ENCODE measurements at regions of chr7 and their contacts with region 1.

Region 1: DNA sequence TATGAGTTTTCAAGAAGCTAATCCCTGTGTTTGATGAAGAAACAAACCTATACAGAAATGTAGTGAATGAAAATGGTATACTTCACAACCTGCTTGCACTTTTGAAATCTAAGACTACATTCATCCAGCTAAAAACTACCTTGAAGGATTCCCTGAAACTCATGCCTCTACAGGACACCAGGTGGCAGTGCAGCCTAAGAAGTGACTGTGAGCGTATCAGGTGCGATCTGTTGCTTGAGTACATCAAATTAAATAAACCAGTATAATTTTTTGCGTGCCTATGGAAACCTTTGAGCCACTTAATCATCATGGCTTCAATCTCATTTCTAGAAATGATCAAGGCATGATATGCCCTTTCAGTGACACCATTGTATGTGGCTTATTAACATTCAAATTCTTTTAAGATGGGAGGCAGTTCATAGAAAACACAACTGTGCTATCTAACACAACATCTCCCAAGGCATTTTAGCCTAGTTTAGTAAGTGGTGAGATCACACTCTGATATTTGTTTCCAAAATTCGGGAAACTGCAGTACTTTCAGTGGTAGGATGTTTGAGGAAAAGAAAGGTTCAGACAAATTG is 57.4 kb downstream of the PPP1R17 start:
- DNase-seq: peak; percentile 59 to 60
- H3K4me3 ChIP-seq: no peak overlapping the region
- H3K27ac ChIP-seq: no peak overlapping the region
- H3K4me1 ChIP-seq: no peaks in the 10 kb centered on the region
- H3K27me3 ChIP-seq: peaks cover 12% of the 10 kb centered on the region; the same call in 1 of the 2 replicates
- CTCF ChIP-seq: peak; percentile 97

Region 2: DNA sequence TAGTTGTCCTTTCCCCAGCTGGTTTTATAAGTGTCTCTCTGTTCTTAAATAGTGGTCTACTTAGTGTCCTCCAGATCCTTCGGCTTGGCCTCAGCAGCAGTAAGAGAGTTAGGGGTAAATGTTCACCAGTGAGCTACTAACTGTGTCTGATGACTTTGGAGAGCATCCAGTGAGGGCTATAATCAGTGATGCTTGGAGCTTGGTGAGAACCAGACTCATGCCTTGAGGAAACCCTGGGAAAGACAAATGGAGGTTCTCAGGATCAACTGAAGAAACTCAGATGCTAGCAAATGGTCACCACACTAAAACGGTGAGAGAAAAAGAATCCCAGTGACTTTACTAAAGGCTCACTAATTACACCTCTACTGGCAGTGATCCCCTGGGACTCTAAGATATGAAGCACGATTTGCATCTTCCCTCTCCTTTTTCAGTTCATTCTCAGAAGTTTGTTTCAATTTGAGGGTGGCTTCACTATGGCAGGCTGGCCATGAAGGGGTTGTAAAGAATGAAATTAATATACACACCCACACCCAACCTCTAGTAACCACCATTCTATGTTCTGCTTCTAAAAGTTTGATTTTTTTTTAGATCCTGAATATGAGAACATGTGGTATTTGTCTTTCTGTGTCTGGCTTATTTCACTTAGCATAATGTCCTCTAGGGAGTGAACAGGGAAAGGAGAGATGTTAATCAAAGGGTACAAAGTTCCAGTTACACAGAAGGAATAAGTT is 147.9 kb after region 1 on chr7:
- CTCF ChIA-PET with region 1: no interaction called
- POLR2A ChIA-PET with region 1: no interaction called
- intact Hi-C with region 1: no loop called
- DNase-seq: no peak
- H3K4me3 ChIP-seq: no peak overlapping the region
- H3K27ac ChIP-seq: no peak overlapping the region
- H3K4me1 ChIP-seq: no peaks in the 10 kb centered on the region
- H3K27me3 ChIP-seq: no peaks in the 10 kb centered on the region
- CTCF ChIP-seq: no peak

Region 3: GRCh38 chr7:32062150-32062549 is 317.8 kb after region 1 on chr7:
- CTCF ChIA-PET with region 1: no interaction called
- POLR2A ChIA-PET with region 1: no interaction called
- intact Hi-C with region 1: loop called (anchors 1 kb)
- DNase-seq: peak; percentile 31 to 35
- H3K4me3 ChIP-seq: no peak overlapping the region
- H3K27ac ChIP-seq: no peak overlapping the region
- H3K4me1 ChIP-seq: no peaks in the 10 kb centered on the region
- H3K27me3 ChIP-seq: peaks cover 53% of the 10 kb centered on the region
- CTCF ChIP-seq: peak; percentile 72

Region 4: GRCh38 chr7:32204361-32205018 is 460.1 kb after region 1 on chr7:
- CTCF ChIA-PET with region 1: interaction called, 5 read pairs
- POLR2A ChIA-PET with region 1: no interaction called
- intact Hi-C with region 1: loop called (anchors 1 kb)
- DNase-seq: peak; percentile 37 to 58
- H3K4me3 ChIP-seq: no peak overlapping the region
- H3K27ac ChIP-seq: no peak overlapping the region
- H3K4me1 ChIP-seq: no peaks in the 10 kb centered on the region
- H3K27me3 ChIP-seq: peaks cover 11% of the 10 kb centered on the region; the same call in 1 of the 2 replicates
- CTCF ChIP-seq: peak; percentile 77

Region 5: GRCh38 chr7:32347244-32347828 is 603.0 kb after region 1 on chr7:
- CTCF ChIA-PET with region 1: no interaction called
- POLR2A ChIA-PET with region 1: no interaction called
- intact Hi-C with region 1: loop called (anchors 2 kb)
- DNase-seq: peak in 1 of 2 experiments; percentile 4
- H3K4me3 ChIP-seq: no peak overlapping the region
- H3K27ac ChIP-seq: no peak overlapping the region
- H3K4me1 ChIP-seq: no peaks in the 10 kb centered on the region
- H3K27me3 ChIP-seq: peaks cover 11% of the 10 kb centered on the region; the same call in 1 of the 2 replicates
- CTCF ChIP-seq: peak; percentile 92

Region 6: GRCh38 chr7:32893207-32893524 is 1148.8 kb after region 1 on chr7:
- CTCF ChIA-PET with region 1: no interaction called
- POLR2A ChIA-PET with region 1: no interaction called
- intact Hi-C with region 1: no loop called
- DNase-seq: no peak
- H3K4me3 ChIP-seq: peak overlapping the region; percentile 86
- H3K27ac ChIP-seq: peak overlapping the region; percentile 87
- H3K4me1 ChIP-seq: peaks cover 34% of the 10 kb centered on the region
- H3K27me3 ChIP-seq: no peaks in the 10 kb centered on the region
- CTCF ChIP-seq: no peak